Left ventricle myocardium superior (tissue), 1 donor: ENCODE measurements at regions of chr12 and their contacts with region 1.

Region 1: GRCh38 chr12:93569656-93570551 is 2.6 kb upstream of the SOCS2 start:
- DNase-seq: peak; percentile 89
- ATAC-seq: peak; percentile 77

Region 2: GRCh38 chr12:93461503-93461902 is 108.4 kb before region 1 on chr12:
- intact Hi-C with region 1: no loop called
- DNase-seq: no peak
- ATAC-seq: no peak

Region 3: GRCh38 chr12:93502802-93503623 is 66.9 kb before region 1 on chr12:
- intact Hi-C with region 1: loop called (anchors 10 kb)
- DNase-seq: no peak
- ATAC-seq: no peak

Region 4: GRCh38 chr12:93979189-93979588 is 409.3 kb after region 1 on chr12:
- intact Hi-C with region 1: loop called (anchors 10 kb)
- DNase-seq: no peak
- ATAC-seq: peak; percentile 16

Region 5: GRCh38 chr12:94101738-94102660 is 532.1 kb after region 1 on chr12:
- intact Hi-C with region 1: loop called (anchors 5 kb)
- DNase-seq: peak; percentile 86
- ATAC-seq: peak; percentile 91